Posterior vena cava (tissue), 2 donors: ENCODE measurements at regions of chr6 and their contacts with region 1.

Region 1: GRCh38 chr6:148736774-148737412 is 9.9 kb upstream of the UST start:
- DNase-seq: no peak

Region 2: DNA sequence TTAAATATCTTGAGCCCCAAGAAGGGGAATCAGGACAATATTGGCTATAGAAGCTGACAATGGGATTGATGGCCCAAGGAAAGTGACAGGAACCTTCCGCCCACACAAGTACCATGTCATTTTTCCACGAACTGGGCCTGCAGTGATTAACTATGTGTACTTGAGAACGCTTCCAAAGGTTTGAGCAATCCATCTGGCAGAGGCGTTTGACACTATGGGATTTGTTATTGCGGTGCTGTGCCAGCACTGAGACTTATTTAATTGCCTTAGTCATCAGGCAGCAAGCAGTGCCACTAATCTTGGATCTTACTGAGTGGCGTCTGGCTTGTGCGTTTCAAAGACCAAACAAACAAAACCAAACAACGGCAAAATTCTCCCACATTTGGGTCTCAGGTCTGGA is 125.7 kb before region 1 on chr6:
- intact Hi-C with region 1: loop called in 1 of 2 experiments (anchors 10 kb)
- DNase-seq: peak; percentile 86

Region 3: GRCh38 chr6:148677594-148678476 is 59.1 kb before region 1 on chr6:
- intact Hi-C with region 1: no loop called
- DNase-seq: no peak

Region 4: DNA sequence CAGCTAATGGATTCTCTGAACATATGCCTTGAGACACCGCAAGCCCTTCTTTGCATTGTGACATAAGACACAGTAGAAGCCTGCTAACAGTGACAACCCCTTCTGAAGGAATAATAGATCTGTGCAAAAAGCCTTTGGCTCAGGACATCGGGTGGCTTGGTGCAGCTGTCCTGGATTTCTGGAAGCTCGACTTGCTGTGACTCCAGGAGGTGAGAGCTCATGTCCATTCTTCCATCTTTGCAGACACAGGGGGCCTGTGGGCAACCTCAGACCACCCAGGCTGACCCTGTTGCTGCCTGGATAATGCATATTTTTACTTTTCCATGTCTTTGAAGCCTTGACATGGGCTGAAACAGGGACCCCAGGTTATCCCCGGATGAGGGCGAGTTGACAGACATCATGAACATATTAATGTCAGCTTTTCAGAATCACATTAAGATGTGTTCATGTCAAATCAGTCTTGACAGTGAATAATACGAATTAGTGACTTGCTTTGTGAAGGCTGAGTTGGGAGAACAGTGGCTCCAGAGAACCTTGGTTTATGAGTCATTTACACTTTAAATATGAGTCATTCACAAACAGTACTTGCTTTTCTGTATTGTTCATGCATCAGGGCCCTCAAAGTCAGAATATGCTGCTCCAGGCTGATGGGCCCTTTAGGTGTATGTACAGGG is 1565.1 kb after region 1 on chr6:
- intact Hi-C with region 1: no loop called
- DNase-seq: no peak